Heart left ventricle (tissue), 16 donors: ENCODE measurements at regions of chr7 and their contacts with region 1.

Region 1: DNA sequence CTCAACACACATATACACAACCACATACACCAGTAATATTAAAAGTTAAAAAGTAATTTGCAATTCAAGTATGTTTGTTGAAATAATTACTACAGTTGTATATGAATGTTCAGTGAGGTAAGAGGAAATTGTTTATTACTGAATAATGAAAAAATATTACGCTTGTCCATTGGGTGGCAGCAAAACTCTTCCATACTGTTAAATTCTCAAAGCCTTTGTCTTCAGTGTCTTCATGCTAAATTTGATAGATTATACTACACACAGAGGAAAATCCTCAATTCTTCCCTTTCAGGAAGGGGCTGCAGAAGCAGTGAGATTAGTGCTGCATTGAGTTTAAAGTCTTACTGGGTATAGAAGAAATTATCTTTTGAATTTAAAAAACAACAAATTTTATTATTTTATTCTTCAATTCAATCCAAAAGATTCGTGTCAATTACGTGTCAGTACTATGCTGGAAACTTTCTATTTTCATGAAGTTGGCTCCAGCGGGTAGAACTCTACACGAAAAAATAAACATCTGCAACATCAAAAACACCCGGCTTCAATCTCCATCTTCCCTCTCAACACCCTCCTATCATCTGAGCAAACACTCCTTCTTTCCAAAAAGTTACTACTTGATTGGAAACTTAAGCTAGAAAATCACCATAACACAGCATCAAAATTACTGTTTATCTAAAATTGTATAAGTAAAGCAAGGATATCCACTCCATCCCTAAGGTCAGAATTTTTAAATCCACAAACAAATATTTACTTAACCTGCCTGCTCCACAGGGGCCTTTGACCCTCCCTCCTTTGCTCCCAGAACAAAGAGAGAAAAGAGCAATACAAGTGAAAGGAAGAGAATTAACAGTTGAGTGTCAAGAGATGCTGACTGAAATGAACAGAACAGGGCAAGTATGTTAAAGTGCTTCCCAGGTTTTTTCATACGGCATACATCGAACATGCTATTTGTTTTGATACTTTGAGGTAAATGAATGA is 37.0 kb upstream of the TES start:
- DNase-seq: no peak
- ATAC-seq: peak in 3 of 4 donors; percentile 36 to 59 (median 57)
- H3K4me3 ChIP-seq: no peak overlapping the region
- H3K27ac ChIP-seq: no peak overlapping the region
- H3K4me1 ChIP-seq: peaks cover 0 to 4% (median 0%) of the 10 kb centered on the region in 12 donors
- H3K27me3 ChIP-seq: no peaks in the 10 kb centered on the region
- CTCF ChIP-seq: peak; percentile 30 to 68 (median 58)
- POLR2A ChIP-seq: no peak

Region 2: DNA sequence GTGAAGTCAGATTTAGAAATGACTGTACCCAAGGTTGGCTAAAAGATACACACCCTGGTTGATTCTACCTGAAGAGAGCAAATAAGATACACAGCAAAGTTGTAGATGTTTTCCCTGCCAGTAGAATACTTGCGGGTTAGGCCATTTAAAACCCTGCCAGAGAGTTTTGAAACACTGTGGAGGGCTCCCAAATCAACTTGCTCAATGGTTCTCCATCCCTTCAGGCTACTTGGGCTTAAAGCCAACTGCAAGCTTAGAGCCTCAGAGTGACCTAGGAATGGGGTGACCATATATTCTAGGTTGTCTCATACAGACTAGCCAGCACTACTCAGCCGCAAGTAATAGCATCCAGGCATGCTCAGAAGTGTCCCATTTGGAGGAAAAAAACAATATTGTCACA is 361.4 kb after region 1 on chr7:
- intact Hi-C with region 1: loop called in 1 of 10 experiments (anchors 5 kb)
- DNase-seq: no peak
- ATAC-seq: peak in 1 of 4 donors; percentile 42
- H3K4me3 ChIP-seq: peak overlapping the region in 4 of 12 donors; percentile 1 to 24 (median 8)
- H3K27ac ChIP-seq: peak overlapping the region in 11 of 12 donors; percentile 6 to 63 (median 33)
- H3K4me1 ChIP-seq: peaks cover 25 to 94% (median 64%) of the 10 kb centered on the region in 12 donors
- H3K27me3 ChIP-seq: no peaks in the 10 kb centered on the region
- CTCF ChIP-seq: no peak
- POLR2A ChIP-seq: no peak

Region 3: GRCh38 chr7:116809636-116810266 is 636.4 kb after region 1 on chr7:
- intact Hi-C with region 1: loop called (anchors 5 kb)
- DNase-seq: peak in 1 of 5 donors; percentile 36
- ATAC-seq: peak; percentile 68 to 80 (median 74)
- H3K4me3 ChIP-seq: no peak overlapping the region
- H3K27ac ChIP-seq: no peak overlapping the region
- H3K4me1 ChIP-seq: peaks cover 0 to 5% (median 0%) of the 10 kb centered on the region in 12 donors
- H3K27me3 ChIP-seq: no peaks in the 10 kb centered on the region
- CTCF ChIP-seq: peak; percentile 52 to 82 (median 66)
- POLR2A ChIP-seq: no peak